HEK293 (cell line): ENCODE measurements at regions of chrX and their contacts with region 1.

Region 1: DNA sequence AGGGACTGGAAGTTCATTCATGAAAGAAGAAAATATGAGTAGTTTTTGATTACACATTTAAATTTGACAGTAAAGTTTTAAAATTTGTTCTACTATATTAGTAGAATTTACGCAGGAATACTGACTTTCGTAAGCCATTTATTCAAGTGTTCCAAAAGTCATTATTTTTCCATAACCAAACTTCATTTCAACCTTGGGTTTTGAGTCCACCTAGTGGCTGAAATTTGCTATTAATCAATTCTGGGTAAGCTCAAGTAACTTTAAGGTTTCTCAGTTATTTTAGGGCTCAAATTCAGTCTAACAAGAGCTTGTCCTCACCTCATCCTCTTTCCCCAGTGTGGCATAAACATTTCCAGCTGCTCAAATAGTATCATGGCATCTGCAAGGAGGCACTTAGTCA is 175.4 kb downstream of the SH3BGRL start:
- H3K4me3 ChIP-seq: no peak overlapping the region
- H3K27ac ChIP-seq: no peak overlapping the region
- H3K4me1 ChIP-seq: no peaks in the 10 kb centered on the region
- CTCF ChIP-seq: no peak

Region 2: GRCh38 chrX:80876877-80877276 is 500.5 kb before region 1 on chrX:
- CTCF ChIA-PET with region 1: interaction called, 11 read pairs
- POLR2A ChIA-PET with region 1: no interaction called
- H3K4me3 ChIP-seq: no peak overlapping the region
- H3K27ac ChIP-seq: no peak overlapping the region
- H3K4me1 ChIP-seq: no peaks in the 10 kb centered on the region
- CTCF ChIP-seq: no peak

Region 3: DNA sequence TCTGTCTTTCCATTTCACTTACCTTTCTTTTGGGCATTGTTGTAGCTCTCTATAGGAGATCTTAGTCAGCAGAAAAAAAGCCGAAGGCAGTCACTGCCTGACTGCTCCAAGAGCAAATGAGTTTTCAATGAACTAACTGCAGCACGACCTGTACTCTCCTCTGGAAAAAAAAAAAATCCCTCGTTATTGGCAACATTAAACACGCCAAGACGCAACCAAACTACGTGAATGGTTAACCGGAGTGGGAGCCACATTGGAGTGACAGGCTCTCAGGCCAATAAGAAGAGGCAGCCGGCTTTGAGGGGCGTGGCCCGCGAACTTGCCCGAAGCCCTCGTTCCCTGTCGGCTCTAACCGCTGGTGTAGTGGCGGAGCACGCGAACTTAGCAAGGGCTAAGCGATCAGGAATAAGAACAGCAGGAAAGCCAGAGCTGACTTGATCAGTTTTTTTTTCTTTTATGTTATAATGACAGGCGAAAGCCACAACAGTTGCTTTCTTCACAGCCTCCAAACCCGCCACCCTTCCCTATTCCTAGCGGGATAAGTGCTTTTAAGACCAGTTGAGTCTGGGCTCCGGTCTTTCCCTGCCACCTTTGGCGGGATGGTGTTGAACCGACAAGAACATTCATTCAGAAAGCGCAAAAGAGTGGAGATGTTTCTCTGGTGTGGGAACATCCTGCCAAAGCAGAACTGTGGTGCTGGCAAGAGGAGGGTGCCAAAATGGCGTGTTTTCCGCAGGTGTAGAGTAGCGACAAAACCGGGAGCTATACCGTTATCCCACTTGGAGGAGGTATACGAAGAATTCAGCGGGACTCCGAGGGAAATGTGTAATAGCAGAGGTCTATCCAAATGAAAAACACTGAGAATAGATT is 255.6 kb before region 1 on chrX:
- CTCF ChIA-PET with region 1: no interaction called
- POLR2A ChIA-PET with region 1: no interaction called
- H3K4me3 ChIP-seq: peak overlapping the region; percentile 48
- H3K27ac ChIP-seq: no peak overlapping the region
- H3K4me1 ChIP-seq: no peaks in the 10 kb centered on the region
- CTCF ChIP-seq: no peak

Region 4: GRCh38 chrX:81174286-81174685 is 203.0 kb before region 1 on chrX:
- CTCF ChIA-PET with region 1: interaction called, 12 read pairs
- POLR2A ChIA-PET with region 1: no interaction called
- H3K4me3 ChIP-seq: no peak overlapping the region
- H3K27ac ChIP-seq: no peak overlapping the region
- H3K4me1 ChIP-seq: no peaks in the 10 kb centered on the region
- CTCF ChIP-seq: no peak

Region 5: GRCh38 chrX:81390237-81390636 is 12.9 kb after region 1 on chrX:
- CTCF ChIA-PET with region 1: interaction called, 15 read pairs
- POLR2A ChIA-PET with region 1: no interaction called
- H3K4me3 ChIP-seq: no peak overlapping the region
- H3K27ac ChIP-seq: no peak overlapping the region
- H3K4me1 ChIP-seq: no peaks in the 10 kb centered on the region
- CTCF ChIP-seq: no peak